Posterior cingulate gyrus (tissue), 11 donors: ENCODE measurements at regions of chr12 and their contacts with region 1.

Region 1: GRCh38 chr12:68040450-68041075 is 51.3 kb downstream of the IFNG-AS1 start:
- DNase-seq: peak in 7 of 10 donors; percentile 25 to 86 (median 64)

Region 2: DNA sequence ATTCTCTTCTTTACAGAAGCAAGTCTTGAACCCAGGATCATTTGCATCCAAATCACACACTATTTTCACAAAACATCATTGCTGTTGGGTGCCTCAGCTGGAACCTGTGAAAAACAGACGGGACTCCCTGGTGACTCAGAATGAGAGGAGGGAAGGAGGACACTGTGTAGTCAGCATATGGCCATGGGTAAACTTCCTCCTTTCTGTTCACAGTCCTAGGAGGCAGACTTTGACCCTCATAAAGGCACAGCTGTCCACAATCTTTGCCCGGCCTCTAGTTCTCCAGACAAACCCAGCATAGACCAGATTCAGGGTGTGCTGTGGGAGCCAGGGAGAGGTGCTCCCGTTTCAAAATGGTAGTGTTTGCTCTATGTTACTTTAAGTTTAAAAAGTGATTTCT is 330.0 kb before region 1 on chr12:
- intact Hi-C with region 1: no loop called
- DNase-seq: peak in 2 of 10 donors; percentile 6 to 8

Region 3: DNA sequence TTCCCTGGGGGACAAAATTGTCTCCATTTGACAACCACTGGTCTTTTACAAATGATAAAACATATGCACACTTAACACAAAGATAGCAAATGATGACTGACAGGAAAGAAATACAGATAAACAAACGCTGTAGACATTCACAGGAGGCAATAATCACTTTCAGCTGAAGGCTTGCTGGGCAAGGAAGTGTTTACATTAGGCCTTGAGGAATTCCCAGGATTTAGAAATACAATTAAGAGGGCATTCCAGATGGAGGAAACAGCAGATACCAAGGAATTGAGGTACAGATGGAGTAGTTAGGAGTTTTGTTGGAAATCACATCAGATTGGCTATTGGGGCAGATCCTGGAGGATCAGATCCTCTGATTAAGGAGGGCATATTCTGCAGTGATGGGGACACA is 298.1 kb before region 1 on chr12:
- intact Hi-C with region 1: no loop called
- DNase-seq: no peak

Region 4: GRCh38 chr12:68148258-68148951 is 107.8 kb after region 1 on chr12:
- intact Hi-C with region 1: no loop called
- DNase-seq: no peak

Region 5: GRCh38 chr12:68158432-68158831 is 117.9 kb after region 1 on chr12:
- intact Hi-C with region 1: loop called (anchors 2 kb)
- DNase-seq: no peak

Region 6: GRCh38 chr12:68223083-68223747 is 182.7 kb after region 1 on chr12:
- intact Hi-C with region 1: loop called (anchors 5 kb)
- DNase-seq: peak; percentile 48 to 95 (median 76)

Region 7: DNA sequence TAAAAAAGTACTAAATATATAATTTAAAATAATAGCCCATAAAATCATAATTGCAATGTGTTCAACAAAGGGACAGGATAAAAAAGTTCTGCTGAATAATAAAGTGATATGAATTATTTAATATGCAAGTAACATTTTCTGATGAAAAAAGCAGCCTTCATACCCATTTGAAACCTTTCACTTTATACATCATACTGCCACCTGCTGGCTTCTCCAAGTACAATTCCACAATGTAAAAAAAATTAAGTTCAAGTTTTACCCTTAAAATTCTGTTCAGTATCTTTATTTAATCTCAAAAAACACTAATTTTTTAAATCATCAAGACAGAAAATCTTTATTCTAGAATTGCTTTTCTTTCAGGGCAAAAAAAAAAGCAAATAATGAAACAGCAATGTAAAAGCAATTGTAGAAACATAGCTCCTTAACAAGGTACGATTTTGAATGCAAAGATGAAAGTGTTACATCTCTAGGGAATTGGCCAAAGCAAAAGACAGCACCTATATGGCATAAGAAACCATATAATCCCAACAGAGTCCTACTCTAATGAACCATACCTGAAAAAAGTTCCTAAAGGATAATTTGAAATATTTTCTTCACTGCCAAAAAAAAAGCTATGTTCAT is 276.6 kb after region 1 on chr12:
- intact Hi-C with region 1: loop called (anchors 2 kb)
- DNase-seq: peak in 1 of 10 donors; percentile 26

Region 8: DNA sequence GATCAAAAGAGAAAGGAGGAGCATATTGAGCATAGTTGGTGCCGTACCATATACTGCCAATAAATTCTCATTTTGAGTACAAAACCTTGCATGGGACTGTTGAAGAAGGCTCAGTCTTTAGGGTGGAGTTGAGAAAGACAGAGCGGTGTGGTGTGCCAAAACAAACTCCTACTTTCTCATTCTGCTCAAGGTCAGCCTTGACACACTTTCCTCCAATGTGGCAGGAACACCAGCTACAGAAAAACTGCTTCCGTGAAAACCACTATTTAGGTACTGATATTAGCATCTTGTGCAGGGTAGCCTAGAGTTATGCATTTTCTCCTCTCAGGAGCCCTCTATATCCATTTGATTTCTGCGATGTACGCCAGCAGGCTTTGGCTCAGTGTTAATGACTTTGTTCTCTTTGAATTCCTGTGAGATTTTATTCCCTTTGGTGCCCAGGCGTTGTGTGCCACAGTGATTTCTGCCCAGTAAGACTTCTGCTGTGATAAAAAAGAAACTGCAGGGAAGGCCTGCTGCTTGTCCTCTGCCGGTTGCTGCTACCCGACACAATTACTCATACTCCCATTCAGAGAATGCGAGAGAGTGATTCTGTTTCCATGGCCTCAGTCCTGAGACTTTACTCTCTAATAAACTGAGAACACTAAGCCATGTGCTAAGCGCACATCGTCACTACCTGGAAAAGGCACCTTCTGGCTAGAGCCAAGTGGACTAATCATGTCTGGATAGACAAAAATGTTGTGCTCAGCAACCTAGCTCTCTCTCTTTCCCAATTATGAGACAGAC is 379.9 kb after region 1 on chr12:
- intact Hi-C with region 1: no loop called
- DNase-seq: peak in 1 of 10 donors; percentile 15